Lower leg skin (tissue), 4 donors: ENCODE measurements at regions of chr15 and their contacts with region 1.

Region 1: DNA sequence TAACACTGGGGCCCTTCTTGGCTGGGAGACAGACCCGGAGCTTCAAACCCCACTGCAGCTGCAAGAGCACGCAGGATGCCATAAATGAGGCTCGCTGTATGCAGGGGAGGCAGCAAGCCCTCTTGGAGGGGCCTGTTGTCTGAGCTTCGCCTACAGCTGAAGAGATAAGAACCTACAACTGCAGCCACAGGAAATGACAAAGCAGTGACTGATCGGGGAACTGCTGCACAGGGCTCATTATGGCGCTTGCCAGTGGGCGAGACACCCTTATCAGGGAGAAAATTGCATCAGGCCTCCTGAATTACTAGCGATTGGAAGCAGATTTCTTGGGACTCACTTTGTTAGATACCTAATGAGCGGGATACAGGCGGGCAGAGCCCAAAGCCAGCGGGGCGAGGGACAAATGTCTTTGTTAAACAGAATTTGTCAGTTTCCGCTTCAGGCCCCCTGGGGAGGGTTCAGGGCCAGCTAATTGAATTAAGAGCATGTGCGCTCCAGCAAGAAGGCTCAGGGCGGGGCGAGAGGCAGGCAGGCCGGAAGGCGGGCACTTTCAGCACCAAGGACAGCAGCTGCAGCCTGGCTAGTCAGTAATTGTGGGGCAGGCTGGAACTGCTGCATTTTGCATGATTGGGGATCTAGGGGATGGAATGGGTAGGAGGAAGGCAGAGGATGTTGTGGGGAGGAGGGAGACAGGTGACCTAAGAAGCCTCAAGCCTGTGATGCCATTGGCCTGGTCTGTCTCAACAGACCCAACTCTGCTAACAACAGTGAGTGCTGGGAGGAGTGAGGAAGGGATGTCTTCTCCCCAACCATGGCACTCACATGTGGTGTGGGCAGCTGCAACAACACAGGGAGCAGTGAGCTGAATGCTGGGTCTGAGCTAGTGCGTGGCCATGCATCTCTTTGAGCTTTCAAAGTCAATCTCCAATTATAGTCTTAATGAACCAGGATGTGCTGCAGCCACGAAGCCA is 55.3 kb downstream of the CCDC33 start:
- DNase-seq: peak; percentile 54 to 92
- H3K4me3 ChIP-seq: no peak overlapping the region
- CTCF ChIP-seq: no peak
- POLR2A ChIP-seq: no peak

Region 2: DNA sequence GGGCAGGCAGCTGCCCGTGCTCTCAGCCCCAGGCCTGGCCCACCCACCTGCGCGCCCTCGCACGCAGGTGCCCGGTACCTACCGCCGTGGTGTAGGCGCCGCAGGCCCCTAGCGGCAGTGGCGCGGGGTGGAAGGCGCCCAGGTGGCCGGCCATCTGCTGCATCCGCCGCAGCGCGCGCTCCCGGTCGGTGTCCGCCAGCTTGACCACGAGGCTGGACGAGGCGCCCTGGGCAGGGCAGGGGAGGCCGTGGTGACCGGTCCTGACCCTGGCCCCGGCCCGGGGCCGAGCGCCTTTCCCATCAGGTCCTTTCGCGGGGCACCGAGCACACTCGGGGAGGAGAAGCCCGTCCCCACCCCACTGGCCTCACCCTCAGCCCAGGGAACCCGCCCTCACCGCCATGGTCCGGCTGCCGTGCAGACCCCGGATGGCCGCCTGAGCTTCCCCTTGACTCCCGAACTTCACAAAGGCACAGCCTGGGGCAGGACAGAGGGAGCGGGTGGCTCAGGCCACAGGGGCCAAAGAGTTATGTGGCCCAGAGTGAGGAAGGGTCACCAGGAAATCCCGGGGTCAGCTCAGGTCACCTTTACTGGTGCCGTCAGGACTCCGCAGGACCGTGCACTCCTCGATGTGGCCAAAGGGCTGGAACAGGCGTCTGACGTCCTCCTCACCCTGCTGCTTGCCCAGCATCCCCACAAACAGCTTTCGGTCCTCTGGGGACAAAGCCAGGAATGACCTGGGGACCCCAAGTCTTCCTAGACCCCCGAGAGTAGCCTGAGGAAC is 2001.7 kb before region 1 on chr15:
- intact Hi-C with region 1: loop called (anchors 5 kb)
- DNase-seq: no peak
- H3K4me3 ChIP-seq: no peak overlapping the region
- CTCF ChIP-seq: no peak
- POLR2A ChIP-seq: no peak

Region 3: GRCh38 chr15:74345051-74345450 is 53.7 kb after region 1 on chr15:
- intact Hi-C with region 1: no loop called
- DNase-seq: no peak
- H3K4me3 ChIP-seq: no peak overlapping the region
- CTCF ChIP-seq: no peak
- POLR2A ChIP-seq: no peak

Region 4: GRCh38 chr15:75565062-75565970 is 1273.9 kb after region 1 on chr15:
- intact Hi-C with region 1: no loop called
- DNase-seq: no peak
- H3K4me3 ChIP-seq: no peak overlapping the region
- CTCF ChIP-seq: no peak
- POLR2A ChIP-seq: no peak